PC-3 (cell line): ENCODE measurements at regions of chr7 and their contacts with region 1.

Region 1: GRCh38 chr7:83794829-83795228 is 145.9 kb upstream of the SEMA3E start:
- DNase-seq: no peak
- ATAC-seq: no peak
- H3K4me3 ChIP-seq: no peak overlapping the region
- H3K27ac ChIP-seq: no peak overlapping the region
- H3K4me1 ChIP-seq: no peaks in the 10 kb centered on the region
- H3K27me3 ChIP-seq: no peaks in the 10 kb centered on the region
- CTCF ChIP-seq: no peak

Region 2: GRCh38 chr7:83410989-83411591 is 383.7 kb before region 1 on chr7:
- CTCF ChIA-PET with region 1: no interaction called
- POLR2A ChIA-PET with region 1: no interaction called
- intact Hi-C with region 1: loop called (anchors 5 kb)
- DNase-seq: peak; percentile 64
- ATAC-seq: no peak
- H3K4me3 ChIP-seq: no peak overlapping the region
- H3K27ac ChIP-seq: no peak overlapping the region
- H3K4me1 ChIP-seq: no peaks in the 10 kb centered on the region
- H3K27me3 ChIP-seq: no peaks in the 10 kb centered on the region
- CTCF ChIP-seq: peak; percentile 76

Region 3: GRCh38 chr7:83677180-83677866 is 117.5 kb before region 1 on chr7:
- CTCF ChIA-PET with region 1: no interaction called
- POLR2A ChIA-PET with region 1: no interaction called
- intact Hi-C with region 1: loop called (anchors 5 kb)
- DNase-seq: peak; percentile 98
- ATAC-seq: peak; percentile 97
- H3K4me3 ChIP-seq: peak overlapping the region; percentile 22; the same call in 1 of the 2 replicates
- H3K27ac ChIP-seq: peak overlapping the region; percentile 71
- H3K4me1 ChIP-seq: peaks cover 16% of the 10 kb centered on the region
- H3K27me3 ChIP-seq: no peaks in the 10 kb centered on the region
- CTCF ChIP-seq: no peak

Region 4: DNA sequence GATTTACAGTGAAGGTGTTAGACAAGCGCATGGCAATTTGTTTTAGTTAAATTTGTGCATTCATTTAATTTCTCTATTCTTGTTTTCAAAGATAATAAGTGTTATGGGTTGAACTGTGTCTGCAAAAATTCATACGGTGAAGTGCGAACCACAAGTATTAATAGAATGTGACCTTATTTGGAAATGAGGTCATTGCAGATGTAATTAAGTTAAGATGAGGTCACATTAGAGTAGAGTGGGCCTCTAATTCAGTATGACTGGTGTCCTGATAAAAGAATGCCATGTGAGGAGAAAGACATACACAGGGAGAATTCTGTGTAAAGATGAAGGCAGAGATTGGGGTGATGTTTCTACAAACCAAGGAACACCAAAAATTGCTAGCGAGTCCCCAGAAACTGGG is 12.9 kb after region 1 on chr7:
- CTCF ChIA-PET with region 1: no interaction called
- POLR2A ChIA-PET with region 1: no interaction called
- intact Hi-C with region 1: no loop called
- DNase-seq: no peak
- ATAC-seq: no peak
- H3K4me3 ChIP-seq: no peak overlapping the region
- H3K27ac ChIP-seq: no peak overlapping the region
- H3K4me1 ChIP-seq: no peaks in the 10 kb centered on the region
- H3K27me3 ChIP-seq: no peaks in the 10 kb centered on the region; the same call in 1 of the 2 replicates
- CTCF ChIP-seq: no peak